Activated B cell treated with CpG ODN at 0.5 μM for 24 hours (primary cell): ENCODE measurements at regions of chr15 and their contacts with region 1.

Region 1: DNA sequence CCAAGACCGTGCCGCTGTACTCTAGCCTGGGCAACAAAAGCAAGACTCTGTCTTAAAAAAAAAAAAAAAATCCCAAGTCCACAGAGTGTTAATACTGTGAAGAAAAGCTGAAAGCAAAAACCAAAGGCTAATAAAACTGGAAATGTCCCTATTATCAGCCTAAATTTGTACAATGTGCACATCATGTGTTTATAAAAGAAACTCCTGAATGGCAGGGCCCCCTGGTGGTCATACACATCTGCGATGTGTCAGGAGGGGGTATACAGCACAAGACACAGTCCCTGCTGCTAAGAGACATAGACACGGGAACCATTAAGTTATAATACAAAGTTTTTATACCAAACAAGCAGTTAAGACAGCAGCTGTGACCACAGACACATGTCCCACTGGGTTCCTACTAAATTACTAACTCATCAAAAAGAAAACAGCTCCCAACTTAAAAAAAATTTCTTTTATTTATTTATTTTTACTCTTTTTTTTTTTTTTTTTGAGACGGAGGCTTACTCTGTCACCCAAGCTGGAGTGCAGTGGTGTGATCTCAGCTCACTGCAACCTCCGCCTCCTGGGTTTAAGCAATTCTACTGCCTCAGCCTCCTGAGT is 31.0 kb downstream of the IDH2 start:
- DNase-seq: peak; percentile 53
- ATAC-seq: peak; percentile 97
- H3K4me3 Mint-ChIP-seq: no peak overlapping the region
- H3K27ac Mint-ChIP-seq: no peak overlapping the region
- H3K4me1 Mint-ChIP-seq: peaks cover 8% of the 10 kb centered on the region
- H3K27me3 Mint-ChIP-seq: no peaks in the 10 kb centered on the region
- CTCF ChIP-seq: peak; percentile 46

Region 2: DNA sequence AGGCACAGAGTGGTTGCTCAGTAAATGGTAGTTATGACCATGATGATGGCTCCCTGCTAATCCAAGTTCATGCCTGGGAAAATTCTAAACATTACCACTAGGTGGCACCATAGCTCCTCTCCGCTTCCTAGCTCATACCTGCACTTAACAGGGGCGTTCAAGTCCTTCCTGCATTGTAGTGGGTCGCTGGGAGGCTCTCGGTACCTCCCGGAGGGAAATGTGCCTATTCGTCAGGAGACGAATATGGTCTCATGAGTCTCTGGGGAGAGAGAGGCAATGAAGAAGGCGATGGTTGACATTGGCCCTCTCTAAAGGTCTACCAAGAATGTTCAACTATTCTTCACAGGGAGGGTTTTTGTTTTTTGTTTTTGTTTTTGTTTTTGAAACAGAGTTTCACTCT is 331.2 kb before region 1 on chr15:
- CTCF ChIA-PET with region 1: no interaction called
- POLR2A ChIA-PET with region 1: interaction called, 3 read pairs
- intact Hi-C with region 1: loop called (anchors 1 kb)
- DNase-seq: no peak
- ATAC-seq: peak; percentile 90
- H3K4me3 Mint-ChIP-seq: peak overlapping the region; percentile 15
- H3K27ac Mint-ChIP-seq: no peak overlapping the region
- H3K4me1 Mint-ChIP-seq: peaks cover 2% of the 10 kb centered on the region
- H3K27me3 Mint-ChIP-seq: peaks cover 8% of the 10 kb centered on the region
- CTCF ChIP-seq: peak; percentile 25

Region 3: GRCh38 chr15:89874926-89875564 is 196.3 kb before region 1 on chr15:
- CTCF ChIA-PET with region 1: interaction called, 7 read pairs
- POLR2A ChIA-PET with region 1: no interaction called
- intact Hi-C with region 1: loop called (anchors 1 kb)
- DNase-seq: peak; percentile 67
- ATAC-seq: peak; percentile 100
- H3K4me3 Mint-ChIP-seq: no peak overlapping the region
- H3K27ac Mint-ChIP-seq: no peak overlapping the region
- H3K4me1 Mint-ChIP-seq: peaks cover 2% of the 10 kb centered on the region
- H3K27me3 Mint-ChIP-seq: no peaks in the 10 kb centered on the region
- CTCF ChIP-seq: no peak

Region 4: GRCh38 chr15:89971592-89971997 is 99.7 kb before region 1 on chr15:
- CTCF ChIA-PET with region 1: interaction called, 16 read pairs
- POLR2A ChIA-PET with region 1: no interaction called
- intact Hi-C with region 1: no loop called
- DNase-seq: peak; percentile 18
- ATAC-seq: peak; percentile 62
- H3K4me3 Mint-ChIP-seq: no peak overlapping the region
- H3K27ac Mint-ChIP-seq: no peak overlapping the region
- H3K4me1 Mint-ChIP-seq: peaks cover 36% of the 10 kb centered on the region
- H3K27me3 Mint-ChIP-seq: no peaks in the 10 kb centered on the region
- CTCF ChIP-seq: no peak

Region 5: GRCh38 chr15:90013503-90013937 is 57.8 kb before region 1 on chr15:
- CTCF ChIA-PET with region 1: interaction called, 10 read pairs
- POLR2A ChIA-PET with region 1: interaction called, 6 read pairs
- intact Hi-C with region 1: no loop called
- DNase-seq: no peak
- ATAC-seq: peak; percentile 45
- H3K4me3 Mint-ChIP-seq: peak overlapping the region; percentile 48
- H3K27ac Mint-ChIP-seq: peak overlapping the region; percentile 20
- H3K4me1 Mint-ChIP-seq: peaks cover 38% of the 10 kb centered on the region
- H3K27me3 Mint-ChIP-seq: no peaks in the 10 kb centered on the region
- CTCF ChIP-seq: no peak

Region 6: GRCh38 chr15:90059208-90059985 is 11.9 kb before region 1 on chr15:
- CTCF ChIA-PET with region 1: interaction called, 11 read pairs
- POLR2A ChIA-PET with region 1: interaction called, 9 read pairs
- intact Hi-C with region 1: loop called (anchors 1 kb)
- DNase-seq: peak; percentile 85
- ATAC-seq: peak; percentile 84
- H3K4me3 Mint-ChIP-seq: peak overlapping the region; percentile 70
- H3K27ac Mint-ChIP-seq: peak overlapping the region; percentile 97
- H3K4me1 Mint-ChIP-seq: peaks cover 81% of the 10 kb centered on the region
- H3K27me3 Mint-ChIP-seq: no peaks in the 10 kb centered on the region
- CTCF ChIP-seq: no peak